ENCODE measurements at regions of chr5 and their contacts with region 1.

Region 1: DNA sequence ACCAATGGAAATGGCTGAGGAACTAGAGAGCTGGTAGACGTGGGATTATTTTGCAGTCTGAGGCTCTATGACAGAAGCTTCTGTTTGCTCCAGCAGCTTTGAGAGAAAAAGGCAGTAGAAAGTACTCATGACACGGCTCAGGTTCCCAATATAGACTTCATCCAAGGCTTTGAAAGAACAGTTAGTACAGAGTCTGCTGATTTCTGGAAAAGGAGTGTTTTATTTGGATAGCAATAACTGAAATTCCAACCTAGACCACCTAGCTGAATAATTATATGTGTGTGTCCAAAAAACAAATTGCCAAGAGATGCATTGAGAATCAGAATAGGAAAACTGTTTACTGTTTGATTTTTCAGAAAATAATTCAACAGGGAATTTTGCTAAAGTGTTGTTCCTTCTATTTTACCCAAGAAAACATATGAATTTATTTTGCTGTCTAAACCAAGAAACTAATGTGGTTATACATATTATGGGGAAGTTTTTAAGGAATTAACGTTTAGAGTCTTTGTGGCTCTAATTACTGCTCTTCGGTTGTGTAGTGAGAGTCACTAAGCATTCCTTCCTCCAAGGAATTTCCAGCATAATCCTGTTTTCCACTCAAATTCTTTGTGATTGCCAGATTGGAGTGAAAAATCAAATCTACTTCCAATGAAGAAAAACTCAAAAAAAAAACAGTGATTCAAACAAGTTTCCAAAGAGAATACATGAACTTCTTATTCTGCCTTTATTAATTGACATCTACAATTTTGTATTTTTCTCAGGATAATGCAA is 18.1 kb upstream of the MTX3 start:
- DNase-seq: no peak
- ATAC-seq: no peak
- H3K4me3 ChIP-seq: no peak overlapping the region
- H3K27ac ChIP-seq: no peak overlapping the region
- H3K4me1 ChIP-seq: no peaks in the 10 kb centered on the region
- H3K27me3 ChIP-seq: no peaks in the 10 kb centered on the region
- CTCF ChIP-seq: no peak
- POLR2A ChIP-seq: no peak
- RAD21 ChIP-seq: no peak

Region 2: DNA sequence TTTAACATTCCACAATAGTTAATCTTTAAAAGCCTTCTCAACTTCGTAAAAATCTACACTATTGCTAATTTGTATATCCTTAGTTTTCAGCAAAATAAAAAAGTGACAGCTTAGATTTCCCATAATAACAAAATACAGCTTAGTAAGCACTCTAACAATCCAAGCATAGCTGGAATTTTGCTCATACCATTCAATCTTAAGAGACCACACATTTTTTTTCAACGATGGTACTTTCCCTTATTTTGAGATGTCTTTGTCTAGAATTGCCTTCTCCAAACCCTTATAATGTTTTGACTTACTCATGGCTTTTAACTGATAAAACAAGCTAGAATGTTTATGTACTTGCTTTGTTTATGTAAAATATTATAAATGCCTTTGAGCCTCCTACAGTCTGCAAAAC is 560.8 kb before region 1 on chr5:
- CTCF ChIA-PET with region 1: no interaction called
- POLR2A ChIA-PET with region 1: no interaction called
- dilution Hi-C with region 1: no loop called
- in situ Hi-C with region 1: no loop called
- intact Hi-C with region 1: no loop called
- DNase-seq: peak; percentile 73
- ATAC-seq: peak; percentile 96
- H3K4me3 ChIP-seq: no peak overlapping the region
- H3K27ac ChIP-seq: no peak overlapping the region; the same call in 1 of the 2 replicates
- H3K4me1 ChIP-seq: peaks cover 2% of the 10 kb centered on the region; the same call in 1 of the 2 replicates
- H3K27me3 ChIP-seq: no peaks in the 10 kb centered on the region
- CTCF ChIP-seq: no peak
- POLR2A ChIP-seq: no peak
- RAD21 ChIP-seq: no peak

Region 3: GRCh38 chr5:80026841-80027240 is 17.7 kb after region 1 on chr5:
- CTCF ChIA-PET with region 1: interaction called, 3 read pairs
- POLR2A ChIA-PET with region 1: no interaction called
- dilution Hi-C with region 1: no loop called
- in situ Hi-C with region 1: no loop called
- intact Hi-C with region 1: loop called (anchors 1 kb)
- DNase-seq: no peak
- ATAC-seq: no peak
- H3K4me3 ChIP-seq: no peak overlapping the region
- H3K27ac ChIP-seq: no peak overlapping the region
- H3K4me1 ChIP-seq: no peaks in the 10 kb centered on the region
- H3K27me3 ChIP-seq: peaks cover 12% of the 10 kb centered on the region
- CTCF ChIP-seq: no peak
- POLR2A ChIP-seq: no peak
- RAD21 ChIP-seq: no peak

Measured in IMR-90 (cell line).